Tibial artery (tissue), 4 donors: ENCODE measurements at regions of chr6 and their contacts with region 1.

Region 1: GRCh38 chr6:2344319-2344905 is 99.0 kb upstream of the GMDS start:
- DNase-seq: no peak
- H3K4me3 ChIP-seq: no peak overlapping the region
- H3K27ac ChIP-seq: no peak overlapping the region
- H3K4me1 ChIP-seq: no peaks in the 10 kb centered on the region
- H3K27me3 ChIP-seq: no peaks in the 10 kb centered on the region
- CTCF ChIP-seq: no peak

Region 2: DNA sequence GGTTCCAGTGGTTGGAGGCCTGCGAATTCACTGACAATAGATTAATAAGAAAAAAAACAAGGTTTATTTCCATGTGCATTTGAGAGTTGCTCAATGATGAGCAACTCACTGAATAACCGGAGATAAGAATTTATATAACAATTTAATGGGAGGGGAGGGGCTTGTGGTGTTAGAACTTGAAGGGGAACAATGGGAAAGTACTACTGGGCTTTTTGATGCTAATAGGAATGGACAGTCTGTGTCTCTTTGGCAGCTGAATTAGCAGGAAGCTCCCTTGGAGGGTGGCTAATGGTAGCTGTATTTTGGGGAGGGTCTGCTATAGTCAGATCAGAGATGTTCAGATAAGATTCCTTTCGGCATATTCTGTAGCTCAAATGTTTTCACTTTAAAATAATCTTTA is 36.6 kb before region 1 on chr6:
- intact Hi-C with region 1: no loop called
- DNase-seq: no peak
- H3K4me3 ChIP-seq: no peak overlapping the region
- H3K27ac ChIP-seq: no peak overlapping the region
- H3K4me1 ChIP-seq: no peaks in the 10 kb centered on the region
- H3K27me3 ChIP-seq: no peaks in the 10 kb centered on the region
- CTCF ChIP-seq: no peak

Region 3: GRCh38 chr6:2448820-2449571 is 104.6 kb after region 1 on chr6:
- intact Hi-C with region 1: loop called (anchors 10 kb)
- DNase-seq: peak in 1 of 2 donors; percentile 40
- H3K4me3 ChIP-seq: peak overlapping the region; percentile 35 to 47
- H3K27ac ChIP-seq: peak overlapping the region; percentile 25 to 38
- H3K4me1 ChIP-seq: peaks cover 0 to 16% (median 5%) of the 10 kb centered on the region in 4 donors
- H3K27me3 ChIP-seq: no peaks in the 10 kb centered on the region
- CTCF ChIP-seq: peak; percentile 76 to 79